HEK293 (cell line): ENCODE measurements at regions of chr17 and their contacts with region 1.

Region 1: GRCh38 chr17:28951991-28952975 is 965 bp upstream of the PHF12 start:
- H3K4me3 ChIP-seq: peak overlapping the region; percentile 73
- H3K27ac ChIP-seq: peak overlapping the region; percentile 87
- H3K4me1 ChIP-seq: peaks cover 7% of the 10 kb centered on the region
- CTCF ChIP-seq: no peak

Region 2: DNA sequence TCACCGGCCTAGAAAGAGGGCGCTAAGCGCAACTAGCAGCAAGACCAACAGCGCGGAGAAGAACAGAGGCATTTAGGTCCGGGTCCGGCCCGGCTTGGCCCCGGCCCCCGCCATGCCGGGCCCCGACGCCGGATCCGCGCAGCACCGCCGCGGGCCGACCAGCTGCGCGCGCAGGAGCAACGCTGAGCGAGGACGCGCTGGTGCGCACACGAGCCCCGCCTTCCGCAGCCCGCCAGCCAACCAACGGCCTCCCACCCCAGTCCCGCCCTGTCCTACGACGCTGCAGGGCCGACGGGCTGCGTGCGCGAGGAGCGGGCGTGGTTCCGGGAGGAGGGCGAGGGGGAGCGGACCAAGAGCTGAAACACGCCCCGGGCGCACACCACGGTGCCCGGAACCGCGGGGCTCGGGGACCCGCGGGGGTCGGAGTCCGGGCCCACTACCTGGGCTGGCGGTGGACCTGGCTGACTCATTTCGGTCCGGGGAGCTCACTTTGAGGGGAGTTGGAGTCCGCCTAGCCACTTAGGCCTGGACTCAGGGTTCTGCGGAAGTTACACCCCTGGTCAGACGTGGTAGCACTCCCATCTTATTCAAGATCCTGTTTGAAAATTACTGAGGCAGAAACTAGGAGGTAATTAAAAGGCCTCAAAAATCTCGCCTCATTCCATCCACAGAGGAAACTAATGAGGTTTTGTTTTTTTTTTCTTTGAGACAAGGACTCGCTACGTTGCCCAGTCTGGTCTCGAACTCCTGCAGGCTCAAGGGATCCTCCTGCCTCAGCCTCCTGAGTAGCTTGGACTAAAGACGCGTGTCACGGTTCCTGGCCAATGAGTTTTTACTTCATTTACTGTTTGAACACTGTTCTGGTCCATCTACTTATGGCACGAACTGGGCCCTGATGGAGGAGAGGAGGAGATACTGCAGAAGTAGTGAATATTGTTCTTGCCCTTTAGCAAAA is 307.0 kb before region 1 on chr17 and contains the start of gene BLTP2:
- CTCF ChIA-PET with region 1: interaction called, 10 read pairs
- POLR2A ChIA-PET with region 1: interaction called, 5 read pairs
- H3K4me3 ChIP-seq: peak within 1 kb of the TSS; percentile 70
- H3K27ac ChIP-seq: peak within 1 kb of the TSS; percentile 55
- H3K4me1 ChIP-seq: peaks cover 5% of the 10 kb centered on the region
- CTCF ChIP-seq: no peak; the same call in 1 of the 2 replicates

Region 3: DNA sequence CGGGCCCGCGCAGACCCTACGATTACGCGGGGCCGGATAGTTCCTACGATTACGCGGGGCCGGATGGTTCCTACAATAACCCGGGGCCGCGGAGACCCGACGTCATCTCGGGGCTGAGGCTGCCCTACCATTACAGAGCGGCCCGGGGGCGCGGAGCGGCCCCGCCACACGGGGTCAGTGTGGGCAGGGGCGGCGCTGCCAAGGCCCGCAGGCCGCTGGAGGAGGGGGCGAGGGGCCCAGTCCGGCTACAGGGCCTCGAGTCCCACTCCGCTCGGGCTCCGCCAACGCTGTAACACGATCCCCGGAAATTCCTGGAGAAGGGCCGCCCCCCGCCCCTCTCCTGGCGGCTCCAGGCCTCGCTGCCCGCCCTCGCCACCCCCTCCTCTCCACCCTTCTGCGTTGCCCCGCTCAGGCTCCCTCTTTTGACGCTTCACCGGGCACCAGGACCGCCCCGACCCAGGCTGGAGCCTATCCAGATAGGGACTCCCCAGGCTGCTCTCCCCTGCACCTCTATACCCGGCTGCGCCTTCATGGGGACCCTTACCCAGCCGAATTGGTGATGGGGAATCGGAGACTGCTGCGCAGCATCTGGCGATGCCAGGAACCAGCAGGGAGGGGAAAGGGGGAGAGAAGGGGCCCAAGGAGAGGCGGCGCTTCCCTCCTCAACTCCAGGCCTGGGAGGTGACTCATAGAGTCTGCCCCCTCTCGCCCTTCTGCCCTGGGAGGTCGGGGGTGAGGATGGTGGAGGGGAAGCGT is 234.5 kb before region 1 on chr17 and contains the start of gene RAB34:
- CTCF ChIA-PET with region 1: interaction called, 3 read pairs
- POLR2A ChIA-PET with region 1: interaction called, 42 read pairs
- H3K4me3 ChIP-seq: peak within 1 kb of the TSS; percentile 67
- H3K27ac ChIP-seq: peak within 1 kb of the TSS; percentile 95
- H3K4me1 ChIP-seq: peaks cover 16% of the 10 kb centered on the region
- CTCF ChIP-seq: peak; percentile 87

Region 4: DNA sequence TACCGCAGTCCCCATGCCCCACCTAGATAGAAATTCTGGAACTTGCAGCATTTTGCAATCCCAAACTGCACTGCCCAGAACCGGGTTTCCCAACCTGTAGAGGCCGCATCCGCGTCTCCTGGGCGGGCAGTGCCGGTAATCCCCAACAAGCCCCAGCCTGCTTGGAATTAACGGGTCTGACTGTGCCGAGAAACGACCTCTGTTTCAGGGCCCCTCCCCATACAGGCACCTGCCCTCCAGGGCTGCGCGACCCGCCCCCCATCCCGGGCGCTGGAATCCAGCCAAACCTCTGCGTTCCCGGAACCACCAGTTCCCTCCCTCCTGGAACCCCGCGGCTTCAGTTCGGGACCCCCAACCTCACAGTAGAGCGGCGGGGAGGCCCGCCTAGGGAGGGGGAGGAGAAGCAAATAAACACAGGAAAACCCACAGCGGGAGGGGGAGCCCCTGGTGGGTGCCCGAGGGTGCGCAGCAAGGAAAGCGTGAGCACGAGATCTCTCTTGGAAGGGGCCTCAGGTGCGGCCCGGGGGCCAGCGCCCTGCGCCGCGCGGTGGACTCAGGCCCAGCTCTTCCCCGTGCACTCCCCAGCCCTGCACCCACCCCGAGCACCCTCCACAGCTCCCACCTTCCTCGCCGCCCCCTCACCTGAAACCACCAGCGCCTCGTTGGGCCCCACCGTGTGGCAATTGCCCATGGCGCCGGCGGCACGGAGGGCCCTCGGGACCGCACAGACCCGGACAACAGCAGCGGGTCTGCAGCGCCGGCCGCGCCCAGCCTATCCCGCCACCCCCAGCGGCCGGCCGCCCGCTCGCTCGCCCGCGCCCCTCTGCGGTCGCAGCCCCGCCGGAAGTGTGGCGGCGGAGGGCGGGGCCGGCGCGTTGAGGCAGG is 55.2 kb before region 1 on chr17 and contains the start of gene FLOT2:
- CTCF ChIA-PET with region 1: interaction called, 26 read pairs
- POLR2A ChIA-PET with region 1: interaction called, 12 read pairs
- H3K4me3 ChIP-seq: peak within 1 kb of the TSS; percentile 88
- H3K27ac ChIP-seq: peak within 1 kb of the TSS; percentile 90
- H3K4me1 ChIP-seq: peaks cover 9% of the 10 kb centered on the region; the same call in 1 of the 2 replicates
- CTCF ChIP-seq: peak; percentile 55

Region 5: GRCh38 chr17:28908640-28909167 is 43.6 kb before region 1 on chr17:
- CTCF ChIA-PET with region 1: interaction called, 26 read pairs
- POLR2A ChIA-PET with region 1: interaction called, 5 read pairs
- H3K4me3 ChIP-seq: no peak overlapping the region
- H3K27ac ChIP-seq: no peak overlapping the region
- H3K4me1 ChIP-seq: no peaks in the 10 kb centered on the region
- CTCF ChIP-seq: no peak

Region 6: GRCh38 chr17:28967221-28968140 is 15.2 kb after region 1 on chr17:
- CTCF ChIA-PET with region 1: interaction called, 69 read pairs
- POLR2A ChIA-PET with region 1: interaction called, 13 read pairs
- H3K4me3 ChIP-seq: no peak overlapping the region
- H3K27ac ChIP-seq: no peak overlapping the region
- H3K4me1 ChIP-seq: no peaks in the 10 kb centered on the region
- CTCF ChIP-seq: no peak

Region 7: GRCh38 chr17:29116804-29117772 is 164.8 kb after region 1 on chr17:
- CTCF ChIA-PET with region 1: interaction called, 680 read pairs
- POLR2A ChIA-PET with region 1: interaction called, 11 read pairs
- H3K4me3 ChIP-seq: no peak overlapping the region
- H3K27ac ChIP-seq: no peak overlapping the region
- H3K4me1 ChIP-seq: no peaks in the 10 kb centered on the region
- CTCF ChIP-seq: peak; percentile 89